Left cardiac atrium (tissue), 4 donors: ENCODE measurements at regions of chr11 and their contacts with region 1.

Region 1: GRCh38 chr11:6505577-6506240 is 8.6 kb downstream of the DNHD1 start:
- DNase-seq: no peak
- ATAC-seq: peak; percentile 59 to 80

Region 2: GRCh38 chr11:6251120-6251733 is 254.5 kb before region 1 on chr11:
- intact Hi-C with region 1: no loop called
- DNase-seq: peak; percentile 58
- ATAC-seq: peak; percentile 79 to 83

Region 3: GRCh38 chr11:6377902-6378639 is 127.6 kb before region 1 on chr11:
- intact Hi-C with region 1: loop called in 1 of 2 experiments (anchors 5 kb)
- DNase-seq: no peak
- ATAC-seq: peak in 1 of 2 donors; percentile 38

Region 4: DNA sequence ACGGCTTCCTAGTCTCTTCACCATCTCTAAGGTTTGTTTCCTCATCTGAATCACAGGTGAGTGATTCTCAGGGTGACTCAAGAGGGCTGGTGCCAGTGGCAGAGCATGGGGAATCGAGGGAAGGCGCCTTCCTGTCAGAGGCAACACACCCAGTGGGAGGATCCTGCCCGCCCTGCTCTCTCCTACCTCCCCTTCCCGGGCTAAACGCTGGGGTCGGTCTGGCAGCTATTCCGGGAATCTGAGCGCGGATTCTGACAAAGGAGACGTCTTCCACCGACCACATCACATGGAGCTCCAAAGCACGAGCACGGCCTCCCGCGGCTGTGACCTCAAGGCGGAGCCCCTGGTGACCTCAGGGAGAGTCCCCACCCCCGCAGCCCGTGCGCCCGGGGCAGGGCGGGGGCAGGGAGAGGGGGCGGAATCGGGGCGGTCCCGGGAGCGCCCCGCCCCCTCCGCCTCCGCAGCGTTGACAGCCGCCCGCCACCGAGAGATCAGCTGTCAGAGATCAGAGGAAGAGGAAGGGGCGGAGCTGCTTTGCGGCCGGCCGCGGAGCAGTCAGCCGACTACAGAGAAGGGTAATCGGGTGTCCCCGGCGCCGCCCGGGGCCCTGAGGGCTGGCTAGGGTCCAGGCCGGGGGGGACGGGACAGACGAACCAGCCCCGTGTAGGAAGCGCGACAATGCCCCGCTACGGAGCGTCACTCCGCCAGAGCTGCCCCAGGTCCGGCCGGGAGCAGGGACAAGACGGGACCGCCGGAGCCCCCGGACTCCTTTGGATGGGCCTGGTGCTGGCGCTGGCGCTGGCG is 115.6 kb before region 1 on chr11 and contains the start of gene SMPD1:
- intact Hi-C with region 1: loop called in 1 of 2 experiments (anchors 5 kb)
- DNase-seq: peak; percentile 95
- ATAC-seq: peak; percentile 98
- total RNA-seq, gene SMPD1: 50.8 to 56.3 TPM

Region 5: DNA sequence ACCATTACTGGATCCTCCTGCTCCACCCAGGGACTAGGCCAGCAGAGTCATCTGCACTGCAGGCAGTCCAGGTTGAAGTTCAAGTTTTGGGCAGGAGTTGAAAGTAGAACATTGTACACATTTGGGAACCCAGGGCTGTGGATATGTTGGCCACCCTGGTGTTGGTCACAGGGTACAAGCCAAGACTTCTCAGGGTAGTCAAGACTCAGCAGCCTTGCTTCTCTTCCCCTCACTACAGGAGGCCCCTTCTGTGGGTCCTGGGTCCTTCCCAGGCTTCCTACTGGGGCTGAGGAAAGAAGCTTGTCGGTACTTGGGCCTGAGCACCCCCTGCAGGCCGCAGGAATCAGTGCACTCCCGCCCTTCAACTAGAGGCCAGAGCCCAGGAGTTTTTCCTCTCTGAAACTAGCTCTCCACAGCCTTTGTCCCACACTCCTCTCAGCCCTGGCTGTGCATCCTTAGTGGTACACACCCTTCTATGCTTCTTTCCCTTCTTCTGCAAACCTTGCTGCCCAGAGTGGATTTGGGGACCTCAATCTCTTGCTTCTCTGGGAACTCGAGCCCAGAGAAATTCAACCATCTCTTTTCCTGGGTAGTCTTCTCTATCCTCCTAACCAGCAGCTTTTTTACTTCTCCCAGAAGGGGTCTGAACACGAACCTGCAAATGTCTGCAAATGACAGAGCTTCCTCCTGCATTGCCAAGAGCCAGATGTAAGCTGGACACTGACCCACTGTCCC is 62.3 kb before region 1 on chr11:
- intact Hi-C with region 1: loop called in 1 of 2 experiments (anchors 10 kb)
- DNase-seq: peak; percentile 65
- ATAC-seq: peak; percentile 65 to 77

Region 6: GRCh38 chr11:6473481-6474422 is 32.0 kb before region 1 on chr11 and contains the start of gene TRIM3:
- intact Hi-C with region 1: no loop called
- DNase-seq: peak; percentile 95
- ATAC-seq: peak; percentile 91 to 92
- total RNA-seq, gene TRIM3: 10.6 to 14.5 TPM